ENCODE measurements at regions of chrX and their contacts with region 1.

Region 1: DNA sequence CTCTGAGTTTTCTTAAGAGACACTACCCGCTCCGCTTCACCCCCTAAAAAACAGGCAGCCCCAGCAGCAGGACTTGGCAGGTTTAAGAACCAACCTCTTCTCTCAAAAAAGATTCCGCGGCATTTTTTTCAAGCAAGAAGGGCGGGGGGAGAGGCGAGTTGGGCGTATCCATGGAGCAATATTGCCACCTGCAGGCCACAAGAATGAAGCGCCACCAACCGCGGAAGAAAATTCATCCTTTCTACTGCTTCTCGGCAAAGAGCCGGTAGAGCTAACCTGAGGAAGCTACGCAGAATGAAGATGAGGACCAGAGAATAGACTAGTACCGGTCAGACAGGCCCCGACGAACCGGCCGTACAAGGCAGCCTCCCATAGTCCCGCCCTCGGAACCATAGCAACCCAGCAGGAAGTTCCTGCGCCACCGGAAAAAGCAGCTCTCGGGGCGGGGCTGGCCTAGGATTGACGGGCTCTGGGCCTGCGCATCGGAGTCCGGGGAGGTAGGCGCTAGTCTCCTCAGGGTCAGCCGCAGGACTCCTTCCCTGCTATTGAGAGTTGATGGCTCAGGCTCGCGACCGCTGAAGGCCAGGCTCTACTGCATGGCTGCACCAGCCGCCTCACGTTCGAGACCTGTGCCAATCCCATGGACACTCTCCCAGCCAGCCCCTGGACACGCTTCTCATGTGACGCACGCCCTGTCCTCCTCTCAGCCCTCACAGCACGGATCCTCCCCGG is 76.9 kb downstream of the MAGED4 start:
- DNase-seq: peak; percentile 87
- H3K4me3 Mint-ChIP-seq: peak overlapping the region; percentile 97
- H3K27ac Mint-ChIP-seq: peak overlapping the region; percentile 99
- H3K4me1 Mint-ChIP-seq: peaks cover 13% of the 10 kb centered on the region
- H3K27me3 Mint-ChIP-seq: peaks cover 46% of the 10 kb centered on the region
- CTCF ChIP-seq: peak; percentile 98

Region 2: GRCh38 chrX:51445936-51446335 is 815.7 kb before region 1 on chrX:
- CTCF ChIA-PET with region 1: no interaction called
- POLR2A ChIA-PET with region 1: no interaction called
- intact Hi-C with region 1: no loop called
- DNase-seq: no peak
- H3K4me3 Mint-ChIP-seq: no peak overlapping the region
- H3K27ac Mint-ChIP-seq: no peak overlapping the region
- H3K4me1 Mint-ChIP-seq: no peaks in the 10 kb centered on the region
- H3K27me3 Mint-ChIP-seq: peaks cover 46% of the 10 kb centered on the region
- CTCF ChIP-seq: no peak

Region 3: GRCh38 chrX:51487960-51488267 is 773.7 kb before region 1 on chrX:
- CTCF ChIA-PET with region 1: interaction called, 5 read pairs
- POLR2A ChIA-PET with region 1: no interaction called
- intact Hi-C with region 1: loop called (anchors 5 kb)
- DNase-seq: no peak
- H3K4me3 Mint-ChIP-seq: no peak overlapping the region
- H3K27ac Mint-ChIP-seq: no peak overlapping the region
- H3K4me1 Mint-ChIP-seq: no peaks in the 10 kb centered on the region
- H3K27me3 Mint-ChIP-seq: peaks cover 58% of the 10 kb centered on the region
- CTCF ChIP-seq: no peak

Region 4: GRCh38 chrX:51614353-51615012 is 647.1 kb before region 1 on chrX:
- CTCF ChIA-PET with region 1: no interaction called
- POLR2A ChIA-PET with region 1: no interaction called
- intact Hi-C with region 1: loop called (anchors 1 kb)
- DNase-seq: peak; percentile 49
- H3K4me3 Mint-ChIP-seq: no peak overlapping the region
- H3K27ac Mint-ChIP-seq: no peak overlapping the region
- H3K4me1 Mint-ChIP-seq: no peaks in the 10 kb centered on the region
- H3K27me3 Mint-ChIP-seq: peaks cover 69% of the 10 kb centered on the region
- CTCF ChIP-seq: peak; percentile 54

Measured in MCF 10A (cell line).